ENCODE measurements at regions of chr11 and their contacts with region 1.

Region 1: GRCh38 chr11:48109046-48109666 is 107.5 kb upstream of the OR4B1 start:
- H3K4me3 Mint-ChIP-seq: no peak overlapping the region
- H3K27ac Mint-ChIP-seq: peak overlapping the region; percentile 82
- H3K4me1 Mint-ChIP-seq: peaks cover 71% of the 10 kb centered on the region
- H3K27me3 Mint-ChIP-seq: no peaks in the 10 kb centered on the region

Region 2: DNA sequence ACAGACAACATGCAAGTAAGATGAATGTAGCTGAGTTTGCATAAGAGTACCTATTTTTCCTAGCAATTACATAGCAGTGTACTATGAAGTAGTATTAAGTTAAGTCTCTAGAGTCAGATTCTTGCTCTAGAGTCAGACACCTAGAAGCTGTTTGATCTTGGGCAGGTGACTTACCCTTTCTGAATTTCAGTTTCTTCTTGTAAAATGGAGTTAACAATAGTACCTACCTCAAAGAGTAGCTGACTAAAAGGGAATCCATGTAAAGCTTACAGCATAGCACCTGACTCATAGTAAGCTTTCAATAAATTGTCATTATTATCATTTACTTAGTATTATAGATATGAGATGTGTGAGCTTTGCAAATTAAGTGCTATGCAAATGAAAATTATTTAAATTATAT is 176.6 kb before region 1 on chr11:
- intact Hi-C with region 1: loop called (anchors 1 kb)
- H3K4me3 Mint-ChIP-seq: no peak overlapping the region
- H3K27ac Mint-ChIP-seq: no peak overlapping the region
- H3K4me1 Mint-ChIP-seq: peaks cover 35% of the 10 kb centered on the region
- H3K27me3 Mint-ChIP-seq: no peaks in the 10 kb centered on the region

Region 3: GRCh38 chr11:48001438-48002021 is 107.6 kb before region 1 on chr11:
- intact Hi-C with region 1: loop called (anchors 10 kb)
- H3K4me3 Mint-ChIP-seq: no peak overlapping the region
- H3K27ac Mint-ChIP-seq: no peak overlapping the region
- H3K4me1 Mint-ChIP-seq: peaks cover 84% of the 10 kb centered on the region
- H3K27me3 Mint-ChIP-seq: no peaks in the 10 kb centered on the region

Region 4: GRCh38 chr11:48034926-48035871 is 74.0 kb before region 1 on chr11:
- intact Hi-C with region 1: loop called (anchors 5 kb)
- H3K4me3 Mint-ChIP-seq: peak overlapping the region; percentile 13
- H3K27ac Mint-ChIP-seq: peak overlapping the region; percentile 78
- H3K4me1 Mint-ChIP-seq: peaks cover 81% of the 10 kb centered on the region
- H3K27me3 Mint-ChIP-seq: no peaks in the 10 kb centered on the region

Region 5: GRCh38 chr11:48066881-48067800 is 42.0 kb before region 1 on chr11:
- intact Hi-C with region 1: loop called (anchors 5 kb)
- H3K4me3 Mint-ChIP-seq: peak overlapping the region; percentile 49
- H3K27ac Mint-ChIP-seq: peak overlapping the region; percentile 80
- H3K4me1 Mint-ChIP-seq: peaks cover 66% of the 10 kb centered on the region
- H3K27me3 Mint-ChIP-seq: no peaks in the 10 kb centered on the region

Region 6: GRCh38 chr11:48228761-48229160 is 119.6 kb after region 1 on chr11:
- intact Hi-C with region 1: no loop called
- H3K4me3 Mint-ChIP-seq: no peak overlapping the region
- H3K27ac Mint-ChIP-seq: no peak overlapping the region
- H3K4me1 Mint-ChIP-seq: no peaks in the 10 kb centered on the region
- H3K27me3 Mint-ChIP-seq: no peaks in the 10 kb centered on the region